ENCODE measurements at regions of chr2 and their contacts with region 1.

Region 1: GRCh38 chr2:105377819-105378218 is 21.0 kb downstream of the FHL2 start:
- DNase-seq: no peak
- H3K4me3 Mint-ChIP-seq: no peak overlapping the region
- H3K27ac Mint-ChIP-seq: no peak overlapping the region
- H3K4me1 Mint-ChIP-seq: peaks cover 45% of the 10 kb centered on the region
- H3K27me3 Mint-ChIP-seq: no peaks in the 10 kb centered on the region
- CTCF ChIP-seq: no peak

Region 2: GRCh38 chr2:105397964-105398698 is 20.3 kb after region 1 on chr2:
- CTCF ChIA-PET with region 1: no interaction called
- intact Hi-C with region 1: loop called (anchors 2 kb)
- DNase-seq: peak; percentile 45
- H3K4me3 Mint-ChIP-seq: peak overlapping the region; percentile 84
- H3K27ac Mint-ChIP-seq: peak overlapping the region; percentile 74
- H3K4me1 Mint-ChIP-seq: peaks cover 37% of the 10 kb centered on the region
- H3K27me3 Mint-ChIP-seq: no peaks in the 10 kb centered on the region
- CTCF ChIP-seq: no peak

Measured in Calu3 (cell line).